ENCODE measurements at regions of chr2 and their contacts with region 1.

Region 1: GRCh38 chr2:151238527-151239487 is 22.9 kb downstream of the RBM43 start:
- ATAC-seq: peak; percentile 67 to 91 (median 80)
- H3K4me3 ChIP-seq: no peak overlapping the region
- H3K27ac ChIP-seq: no peak overlapping the region
- H3K4me1 ChIP-seq: peaks cover 0 to 23% of the 10 kb centered on the region in 2 donors

Region 2: GRCh38 chr2:150610671-150611279 is 628.0 kb before region 1 on chr2:
- in situ Hi-C with region 1: loop called in 1 of 9 experiments (anchors 25 kb)
- ATAC-seq: peak in 3 of 8 experiments; percentile 19 to 75 (median 38)
- H3K4me3 ChIP-seq: no peak overlapping the region
- H3K27ac ChIP-seq: no peak overlapping the region
- H3K4me1 ChIP-seq: peaks cover 0 to 7% of the 10 kb centered on the region in 2 donors

Region 3: GRCh38 chr2:150878356-150878755 is 360.5 kb before region 1 on chr2:
- in situ Hi-C with region 1: loop called in 1 of 9 experiments (anchors 25 kb)
- ATAC-seq: peak in 2 of 8 experiments; percentile 79 to 97
- H3K4me3 ChIP-seq: no peak overlapping the region
- H3K27ac ChIP-seq: no peak overlapping the region
- H3K4me1 ChIP-seq: peaks cover 9 to 18% of the 10 kb centered on the region in 2 donors

Region 4: DNA sequence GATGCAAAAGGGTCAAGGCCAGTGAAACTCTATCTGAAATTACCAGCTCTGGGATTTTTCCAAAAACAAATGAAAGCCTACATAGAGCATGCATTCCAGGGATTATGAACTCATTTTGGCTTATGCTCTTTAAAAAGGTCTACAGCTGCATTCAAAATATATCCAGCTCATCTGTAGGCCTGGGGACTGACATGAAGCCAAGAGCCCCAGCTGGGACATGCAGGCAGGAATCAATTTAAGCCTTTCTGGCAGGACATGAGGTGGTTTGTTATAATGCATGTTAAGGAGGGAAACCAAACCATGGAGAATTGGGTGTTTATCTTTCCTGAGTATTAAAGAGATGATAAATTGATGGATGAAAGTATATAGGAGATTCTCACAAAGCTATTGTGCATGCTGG is 141.7 kb before region 1 on chr2:
- in situ Hi-C with region 1: loop called in 1 of 9 experiments (anchors 25 kb)
- ATAC-seq: no peak
- H3K4me3 ChIP-seq: no peak overlapping the region
- H3K27ac ChIP-seq: no peak overlapping the region
- H3K4me1 ChIP-seq: peaks cover 0 to 19% of the 10 kb centered on the region in 2 donors

Measured in motor neuron (in vitro differentiated cells).